Heart left ventricle (tissue), 16 donors: ENCODE measurements at regions of chr10 and their contacts with region 1.

Region 1: GRCh38 chr10:865257-865656 is 66.2 kb downstream of the LARP4B start:
- DNase-seq: no peak
- ATAC-seq: peak in 1 of 4 donors; percentile 5
- H3K4me3 ChIP-seq: no peak overlapping the region
- H3K27ac ChIP-seq: peak overlapping the region in 1 of 12 donors; percentile 33
- H3K4me1 ChIP-seq: peaks cover 0 to 46% (median 25%) of the 10 kb centered on the region in 12 donors
- H3K27me3 ChIP-seq: no peaks in the 10 kb centered on the region
- CTCF ChIP-seq: no peak
- POLR2A ChIP-seq: no peak

Region 2: DNA sequence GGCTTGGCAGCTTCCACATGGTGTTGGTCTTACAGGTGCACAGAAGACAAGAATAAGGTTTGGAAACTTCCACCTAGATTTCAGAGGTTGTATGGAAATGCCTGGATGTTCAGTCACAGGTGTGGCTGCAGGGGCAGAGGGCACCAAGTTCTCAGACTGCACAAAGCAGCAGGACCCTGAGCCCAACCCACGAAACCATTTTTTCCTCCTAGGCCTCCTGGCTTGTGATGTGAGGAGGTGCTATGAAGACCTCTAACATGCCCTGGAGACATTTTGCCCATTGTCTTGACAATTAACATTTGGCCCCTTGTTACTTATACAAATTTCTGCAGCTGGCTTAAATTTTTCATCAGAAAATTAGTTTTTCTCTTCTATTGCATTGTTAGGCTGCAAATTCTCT is 68.1 kb before region 1 on chr10:
- intact Hi-C with region 1: no loop called
- DNase-seq: no peak
- ATAC-seq: no peak
- H3K4me3 ChIP-seq: no peak overlapping the region
- H3K27ac ChIP-seq: no peak overlapping the region
- H3K4me1 ChIP-seq: no peaks in the 10 kb centered on the region
- H3K27me3 ChIP-seq: no peaks in the 10 kb centered on the region
- CTCF ChIP-seq: no peak
- POLR2A ChIP-seq: no peak

Region 3: GRCh38 chr10:810351-810846 is 54.9 kb before region 1 on chr10:
- intact Hi-C with region 1: loop called in 1 of 10 experiments (anchors 10 kb)
- DNase-seq: no peak
- ATAC-seq: peak; percentile 28 to 76 (median 58)
- H3K4me3 ChIP-seq: no peak overlapping the region
- H3K27ac ChIP-seq: peak overlapping the region in 9 of 12 donors; percentile 2 to 66 (median 32)
- H3K4me1 ChIP-seq: peaks cover 0 to 14% (median under 1%) of the 10 kb centered on the region in 12 donors
- H3K27me3 ChIP-seq: no peaks in the 10 kb centered on the region
- CTCF ChIP-seq: peak in 9 of 12 donors; percentile 8 to 51 (median 41)
- POLR2A ChIP-seq: no peak

Region 4: GRCh38 chr10:824946-825345 is 40.3 kb before region 1 on chr10:
- intact Hi-C with region 1: loop called in 1 of 10 experiments (anchors 5 kb)
- DNase-seq: no peak
- ATAC-seq: no peak
- H3K4me3 ChIP-seq: no peak overlapping the region
- H3K27ac ChIP-seq: no peak overlapping the region
- H3K4me1 ChIP-seq: no peaks in the 10 kb centered on the region
- H3K27me3 ChIP-seq: no peaks in the 10 kb centered on the region
- CTCF ChIP-seq: no peak
- POLR2A ChIP-seq: no peak

Region 5: GRCh38 chr10:1094112-1095057 is 229.1 kb after region 1 on chr10:
- intact Hi-C with region 1: no loop called
- DNase-seq: no peak
- ATAC-seq: no peak
- H3K4me3 ChIP-seq: no peak overlapping the region
- H3K27ac ChIP-seq: no peak overlapping the region
- H3K4me1 ChIP-seq: peaks cover 0 to 11% (median 7%) of the 10 kb centered on the region in 12 donors
- H3K27me3 ChIP-seq: no peaks in the 10 kb centered on the region
- CTCF ChIP-seq: no peak
- POLR2A ChIP-seq: no peak